Esophagus muscularis mucosa (tissue), 4 donors: ENCODE measurements at regions of chr7 and their contacts with region 1.

Region 1: DNA sequence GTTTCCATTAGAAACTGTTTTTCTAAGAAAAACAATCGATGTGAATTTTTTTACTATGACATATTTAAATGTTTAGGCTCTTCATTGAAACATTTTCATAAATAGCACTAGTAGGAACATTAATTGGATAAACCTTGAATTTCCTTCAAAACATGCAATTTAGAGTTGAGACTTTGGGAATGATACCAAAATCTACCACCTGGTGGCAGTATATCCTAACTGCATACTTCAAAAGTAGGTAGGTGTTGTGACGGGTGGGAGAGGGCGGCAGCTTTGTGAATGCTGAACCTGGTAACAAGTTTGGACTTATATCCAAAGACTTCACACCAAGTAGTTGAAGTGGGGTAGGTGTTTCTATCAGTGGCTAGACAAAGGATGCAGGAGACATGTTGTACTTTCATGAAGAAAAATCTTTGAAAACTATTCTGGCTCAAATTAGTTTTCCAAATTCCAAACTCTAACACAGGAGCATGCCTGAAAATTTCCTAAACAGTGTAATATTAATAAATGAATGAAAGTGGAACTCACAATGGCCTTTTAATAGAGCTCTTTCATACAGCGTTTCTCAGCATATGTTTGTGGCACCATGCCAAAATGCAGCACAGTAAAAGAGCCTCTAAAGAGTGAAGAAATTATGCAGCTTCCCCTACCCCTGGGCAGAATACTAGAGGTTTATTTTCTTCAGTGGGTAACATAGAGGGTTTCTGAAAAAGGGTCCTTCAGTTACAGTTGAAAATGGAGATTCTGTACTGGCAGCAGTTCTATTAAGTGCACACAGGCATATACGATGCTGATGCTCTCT is 201.0 kb upstream of the TPK1 start:
- DNase-seq: no peak
- H3K4me3 ChIP-seq: no peak overlapping the region
- H3K27ac ChIP-seq: no peak overlapping the region
- H3K4me1 ChIP-seq: no peaks in the 10 kb centered on the region
- H3K27me3 ChIP-seq: no peaks in the 10 kb centered on the region
- CTCF ChIP-seq: peak; percentile 53 to 75 (median 63)
- EP300 ChIP-seq: no peak
- POLR2A ChIP-seq: no peak

Region 2: DNA sequence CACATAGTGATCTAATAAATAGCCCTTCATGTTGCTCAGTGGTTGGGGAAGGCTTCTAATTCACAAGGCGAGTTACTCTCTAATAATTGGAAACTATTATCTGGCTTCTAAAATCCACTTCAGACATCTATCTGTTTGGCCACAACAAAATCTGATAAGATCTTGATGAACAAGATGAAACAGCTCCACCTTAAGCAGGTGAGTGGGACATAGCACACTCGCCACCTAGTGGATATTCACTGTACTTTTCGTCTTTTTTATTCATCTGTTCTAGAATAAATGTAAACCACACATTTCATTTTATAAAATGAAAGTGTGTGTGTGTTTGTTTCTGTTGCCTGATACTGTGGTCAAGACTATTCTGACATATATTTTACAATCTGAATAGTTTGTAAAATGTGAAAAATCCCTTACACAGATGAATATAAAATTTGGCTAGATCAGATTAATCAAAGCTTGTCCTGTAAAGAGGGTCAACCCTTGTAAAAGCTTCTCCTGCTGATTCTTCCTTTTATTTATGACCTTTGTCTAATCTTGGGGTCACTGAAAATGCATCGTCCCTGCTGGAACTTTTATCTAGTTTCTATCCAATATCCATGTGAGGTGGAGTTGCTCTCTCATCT is 1053.3 kb after region 1 on chr7:
- intact Hi-C with region 1: loop called (anchors 10 kb)
- DNase-seq: no peak
- H3K4me3 ChIP-seq: no peak overlapping the region
- H3K27ac ChIP-seq: no peak overlapping the region
- H3K4me1 ChIP-seq: no peaks in the 10 kb centered on the region
- H3K27me3 ChIP-seq: no peaks in the 10 kb centered on the region
- CTCF ChIP-seq: peak; percentile 38 to 58 (median 54)
- EP300 ChIP-seq: no peak
- POLR2A ChIP-seq: no peak